HCT116 (cell line): ENCODE measurements at regions of chr1 and their contacts with region 1.

Region 1: GRCh38 chr1:213122514-213122929 is 71.5 kb downstream of the RPS6KC1 start:
- DNase-seq: peak; percentile 55
- ATAC-seq: no peak
- H3K4me3 ChIP-seq: no peak overlapping the region
- H3K27ac ChIP-seq: peak overlapping the region; percentile 70; the same call in 1 of the 2 replicates
- H3K4me1 ChIP-seq: peaks cover 66 to 69% of the 10 kb centered on the region in 2 experiments
- H3K27me3 ChIP-seq: no peaks in the 10 kb centered on the region
- CTCF ChIP-seq: peak; percentile 36 to 48 (median 36); a peak in 3 of 6 replicates
- POLR2A ChIP-seq: no peak
- RAD21 ChIP-seq: peak; percentile 71

Region 2: DNA sequence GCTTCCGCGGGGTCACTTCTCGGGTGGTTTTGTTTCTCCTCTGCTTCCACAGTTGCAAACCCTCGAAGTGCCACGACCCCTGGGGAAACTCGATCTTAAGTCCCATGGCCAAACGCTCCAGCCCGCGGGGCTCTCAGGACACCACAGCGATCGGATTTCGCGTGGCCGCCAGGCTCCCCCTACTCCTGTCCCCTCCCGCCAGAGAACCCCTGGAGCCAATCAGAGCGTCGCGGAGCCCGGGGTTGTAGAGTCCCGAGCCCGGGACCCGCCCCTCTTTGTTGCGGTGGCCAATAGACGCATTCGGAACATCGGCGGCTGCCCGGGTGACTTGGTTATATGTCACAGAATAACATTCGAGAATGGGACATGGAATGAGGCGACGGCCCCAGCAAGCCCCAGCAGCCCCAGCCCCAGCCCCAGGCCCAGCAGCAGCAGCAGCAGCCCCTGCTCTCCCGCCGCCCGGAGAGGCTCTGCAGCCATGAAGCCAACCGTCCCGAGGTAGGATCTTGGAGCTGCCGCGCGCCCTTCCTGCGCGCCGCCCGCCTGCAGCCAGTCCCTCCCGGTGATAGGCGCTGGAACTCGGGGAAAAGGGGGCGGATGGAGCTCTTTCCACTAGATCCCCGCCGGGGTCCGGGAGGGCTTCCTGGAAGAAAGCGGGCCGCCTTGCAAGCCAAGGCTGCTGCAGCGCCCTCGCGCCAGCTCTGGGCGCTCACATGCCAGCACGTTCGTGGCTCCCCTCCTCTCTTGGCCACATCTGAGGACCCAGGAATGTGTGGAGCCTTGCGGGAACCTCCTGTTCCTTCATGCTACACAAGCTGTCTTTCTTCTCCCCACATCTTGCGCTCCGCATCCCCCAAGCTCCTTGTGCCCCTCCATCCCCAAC is 172.0 kb before region 1 on chr1 and contains the start of gene VASH2:
- CTCF ChIA-PET with region 1: no interaction called
- POLR2A ChIA-PET with region 1: no interaction called
- RAD21 ChIA-PET with region 1: no interaction called
- intact Hi-C with region 1: no loop called
- DNase-seq: peak; percentile 57
- ATAC-seq: peak; percentile 100
- H3K4me3 ChIP-seq: peak within 1 kb of the TSS; percentile 48 to 61
- H3K27ac ChIP-seq: no peak within 1 kb of the TSS; the same call in 1 of the 2 replicates
- H3K4me1 ChIP-seq: peaks cover 2 to 13% of the 10 kb centered on the region in 2 experiments; a peak in 3 of 4 replicates
- H3K27me3 ChIP-seq: no peaks in the 10 kb centered on the region
- CTCF ChIP-seq: no peak
- POLR2A ChIP-seq: no peak
- RAD21 ChIP-seq: no peak
- total RNA-seq, gene VASH2: 5.7 TPM

Region 3: GRCh38 chr1:213435715-213436114 is 313.2 kb after region 1 on chr1:
- CTCF ChIA-PET with region 1: no interaction called
- POLR2A ChIA-PET with region 1: no interaction called
- RAD21 ChIA-PET with region 1: no interaction called
- intact Hi-C with region 1: loop called (anchors 10 kb)
- DNase-seq: no peak
- ATAC-seq: no peak
- H3K4me3 ChIP-seq: no peak overlapping the region
- H3K27ac ChIP-seq: no peak overlapping the region
- H3K4me1 ChIP-seq: no peaks in the 10 kb centered on the region
- H3K27me3 ChIP-seq: peaks cover 19% of the 10 kb centered on the region
- CTCF ChIP-seq: no peak
- POLR2A ChIP-seq: no peak
- RAD21 ChIP-seq: no peak

Region 4: DNA sequence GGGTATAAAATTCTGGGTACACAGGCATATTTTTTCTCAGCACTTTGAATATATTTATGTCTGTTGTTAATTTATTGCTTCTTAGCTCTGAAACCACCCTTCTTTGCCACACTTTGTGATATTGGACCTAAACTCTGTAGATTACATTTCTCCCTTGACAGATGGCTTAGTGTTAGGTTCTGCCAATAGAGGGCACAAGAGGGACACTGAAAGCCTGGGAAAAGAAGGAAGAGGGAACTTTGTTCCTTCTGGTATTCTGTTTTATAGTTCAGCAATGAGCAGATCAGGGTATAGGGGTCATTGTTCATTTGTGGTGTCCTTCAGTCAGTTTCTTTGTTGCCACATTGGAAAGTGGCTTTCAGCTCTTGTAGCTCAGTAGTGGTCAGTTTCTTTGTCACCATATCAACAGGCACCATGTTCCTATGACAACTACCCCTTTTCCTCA is 441.7 kb after region 1 on chr1:
- CTCF ChIA-PET with region 1: no interaction called
- POLR2A ChIA-PET with region 1: no interaction called
- RAD21 ChIA-PET with region 1: no interaction called
- intact Hi-C with region 1: loop called (anchors 10 kb)
- DNase-seq: peak; percentile 12
- ATAC-seq: peak; percentile 53
- H3K4me3 ChIP-seq: no peak overlapping the region
- H3K27ac ChIP-seq: no peak overlapping the region
- H3K4me1 ChIP-seq: no peaks in the 10 kb centered on the region
- H3K27me3 ChIP-seq: no peaks in the 10 kb centered on the region
- CTCF ChIP-seq: peak; percentile 28 to 70 (median 64); a peak in 5 of 6 replicates
- POLR2A ChIP-seq: no peak
- RAD21 ChIP-seq: peak; percentile 61

Region 5: DNA sequence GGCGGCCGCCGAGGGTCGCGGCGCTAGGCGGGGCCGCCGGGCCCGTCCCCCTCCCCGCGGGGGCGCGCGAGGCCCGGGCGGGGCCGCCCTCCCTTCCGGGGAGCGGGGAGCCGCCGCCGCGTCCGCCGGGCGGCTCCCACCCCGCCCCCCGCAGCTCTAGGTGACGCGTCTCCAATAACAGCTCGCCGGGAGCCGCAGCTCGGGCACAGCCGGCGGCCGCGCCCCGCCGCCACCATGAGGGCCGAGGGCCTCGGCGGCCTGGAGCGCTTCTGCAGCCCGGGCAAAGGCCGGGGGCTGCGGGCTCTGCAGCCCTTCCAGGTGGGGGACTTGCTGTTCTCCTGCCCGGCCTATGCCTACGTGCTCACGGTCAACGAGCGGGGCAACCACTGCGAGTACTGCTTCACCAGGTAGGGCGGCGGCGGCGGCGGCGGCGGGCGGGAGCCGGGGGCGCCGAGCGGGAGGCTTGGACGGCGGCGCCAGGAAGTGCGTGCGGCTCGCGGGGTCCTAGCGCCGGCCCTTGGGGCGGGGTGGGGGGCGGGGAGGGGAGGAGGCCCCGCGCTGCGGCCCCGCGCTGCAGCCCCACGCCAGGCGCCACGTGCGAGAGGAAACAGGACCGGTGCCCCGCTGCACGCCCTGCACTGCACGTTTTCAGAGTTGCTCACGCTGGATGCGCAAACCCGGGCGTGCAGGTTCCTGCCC is 1158.6 kb after region 1 on chr1 and contains the start of gene SMYD2:
- CTCF ChIA-PET with region 1: no interaction called
- POLR2A ChIA-PET with region 1: no interaction called
- RAD21 ChIA-PET with region 1: no interaction called
- intact Hi-C with region 1: loop called (anchors 10 kb)
- DNase-seq: peak; percentile 36
- ATAC-seq: peak; percentile 79
- H3K4me3 ChIP-seq: peak within 1 kb of the TSS; percentile 69 to 75
- H3K27ac ChIP-seq: peak within 1 kb of the TSS; percentile 90
- H3K4me1 ChIP-seq: peaks cover 15 to 24% of the 10 kb centered on the region in 2 experiments; a peak in 3 of 4 replicates
- H3K27me3 ChIP-seq: no peaks in the 10 kb centered on the region
- CTCF ChIP-seq: no peak
- POLR2A ChIP-seq: no peak
- RAD21 ChIP-seq: no peak
- total RNA-seq, gene SMYD2: 27.2 TPM

Region 6: GRCh38 chr1:214446772-214447556 is 1324.4 kb after region 1 on chr1:
- CTCF ChIA-PET with region 1: no interaction called
- POLR2A ChIA-PET with region 1: no interaction called
- RAD21 ChIA-PET with region 1: no interaction called
- intact Hi-C with region 1: no loop called
- DNase-seq: peak; percentile 93
- ATAC-seq: peak; percentile 88
- H3K4me3 ChIP-seq: peak overlapping the region; percentile 41 to 58
- H3K27ac ChIP-seq: peak overlapping the region; percentile 81
- H3K4me1 ChIP-seq: peaks cover 47 to 58% of the 10 kb centered on the region in 2 experiments
- H3K27me3 ChIP-seq: no peaks in the 10 kb centered on the region
- CTCF ChIP-seq: no peak
- POLR2A ChIP-seq: no peak
- RAD21 ChIP-seq: peak; percentile 42